ENCODE measurements at regions of chr5 and their contacts with region 1.

Region 1: DNA sequence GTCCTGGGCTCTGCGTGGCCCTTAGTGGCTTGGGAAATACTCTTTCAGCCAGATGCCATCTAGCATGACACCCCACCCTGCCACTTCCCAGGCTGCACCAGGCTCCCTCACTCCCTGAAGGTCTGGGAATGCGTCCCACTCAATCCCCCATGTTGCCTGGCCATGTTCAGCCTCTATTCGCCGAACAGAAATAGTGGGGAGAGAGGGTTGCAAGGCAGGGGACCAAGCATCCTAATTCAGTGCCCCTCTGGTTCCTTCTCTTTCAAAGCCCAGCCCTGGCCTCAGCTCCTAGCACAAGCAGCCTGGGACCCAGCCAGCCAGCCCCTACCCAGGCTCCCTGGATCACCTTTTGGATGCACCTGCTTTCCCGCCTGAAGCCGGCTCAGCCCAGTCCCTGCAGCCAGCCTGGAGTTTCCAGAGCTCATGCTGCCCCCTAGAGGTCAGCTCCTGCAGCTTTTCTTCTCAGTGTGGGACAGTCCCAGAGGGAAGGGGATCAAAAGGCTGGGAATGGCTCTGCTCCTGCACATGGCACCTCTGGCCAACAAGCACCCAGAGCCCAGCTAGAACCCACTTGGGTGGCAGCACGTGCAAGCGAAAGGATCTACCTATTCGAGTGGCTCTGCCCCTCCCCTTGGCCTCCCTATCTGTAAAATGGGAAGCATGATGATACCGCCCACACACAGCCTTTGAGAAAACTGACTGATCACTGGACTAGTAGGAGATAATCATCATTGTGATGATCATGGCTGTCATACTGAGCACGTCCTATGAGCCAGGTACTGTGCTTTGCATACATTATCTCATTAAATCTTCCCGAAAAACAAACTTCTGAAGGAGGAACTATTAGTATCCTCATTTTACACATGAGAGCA is 48.7 kb upstream of the C5orf58 start:
- DNase-seq: no peak
- ATAC-seq: peak; percentile 96
- H3K4me3 ChIP-seq: no peak overlapping the region
- H3K27ac ChIP-seq: no peak overlapping the region
- H3K4me1 ChIP-seq: no peaks in the 10 kb centered on the region
- H3K27me3 ChIP-seq: no peaks in the 10 kb centered on the region; a peak in 1 of 4 replicates
- CTCF ChIP-seq: peak; percentile 73 to 85 (median 84)
- EP300 ChIP-seq: no peak
- POLR2A ChIP-seq: no peak
- RAD21 ChIP-seq: peak; percentile 82

Region 2: DNA sequence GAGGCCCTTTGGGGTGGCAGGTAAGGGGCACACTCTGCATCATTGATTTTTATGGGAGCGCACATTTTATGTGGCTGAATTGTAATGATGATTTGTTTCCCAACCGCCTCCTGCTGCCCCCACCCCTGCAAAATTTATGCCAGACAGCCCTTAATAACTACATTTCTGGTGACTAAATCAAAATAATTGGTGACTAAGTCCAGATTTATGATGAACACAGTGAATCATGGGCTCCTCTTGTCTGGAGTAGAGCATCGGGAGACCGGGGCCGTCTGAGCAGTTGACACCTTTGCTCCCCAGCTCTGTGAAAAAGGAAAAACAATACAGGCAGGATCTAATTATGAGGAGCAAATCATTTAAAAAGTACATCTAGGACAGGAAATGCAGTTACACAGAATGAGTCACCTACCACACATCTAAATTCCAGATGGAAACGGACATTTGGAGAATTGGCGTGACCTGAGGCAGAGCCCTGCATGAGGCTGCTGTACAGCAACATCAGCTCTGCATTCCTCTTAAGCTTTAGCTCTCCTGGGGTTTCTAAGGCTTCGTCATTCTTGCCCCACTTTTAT is 488.0 kb before region 1 on chr5:
- CTCF ChIA-PET with region 1: interaction called, 5 read pairs
- POLR2A ChIA-PET with region 1: no interaction called
- RAD21 ChIA-PET with region 1: no interaction called
- SMC1A ChIA-PET with region 1: no interaction called
- in situ Hi-C with region 1: loop called (anchors 10 kb)
- intact Hi-C with region 1: no loop called
- DNase-seq: no peak
- ATAC-seq: no peak
- H3K4me3 ChIP-seq: no peak overlapping the region
- H3K27ac ChIP-seq: no peak overlapping the region
- H3K4me1 ChIP-seq: no peaks in the 10 kb centered on the region
- H3K27me3 ChIP-seq: no peaks in the 10 kb centered on the region
- CTCF ChIP-seq: no peak
- EP300 ChIP-seq: no peak
- POLR2A ChIP-seq: no peak
- RAD21 ChIP-seq: no peak

Region 3: DNA sequence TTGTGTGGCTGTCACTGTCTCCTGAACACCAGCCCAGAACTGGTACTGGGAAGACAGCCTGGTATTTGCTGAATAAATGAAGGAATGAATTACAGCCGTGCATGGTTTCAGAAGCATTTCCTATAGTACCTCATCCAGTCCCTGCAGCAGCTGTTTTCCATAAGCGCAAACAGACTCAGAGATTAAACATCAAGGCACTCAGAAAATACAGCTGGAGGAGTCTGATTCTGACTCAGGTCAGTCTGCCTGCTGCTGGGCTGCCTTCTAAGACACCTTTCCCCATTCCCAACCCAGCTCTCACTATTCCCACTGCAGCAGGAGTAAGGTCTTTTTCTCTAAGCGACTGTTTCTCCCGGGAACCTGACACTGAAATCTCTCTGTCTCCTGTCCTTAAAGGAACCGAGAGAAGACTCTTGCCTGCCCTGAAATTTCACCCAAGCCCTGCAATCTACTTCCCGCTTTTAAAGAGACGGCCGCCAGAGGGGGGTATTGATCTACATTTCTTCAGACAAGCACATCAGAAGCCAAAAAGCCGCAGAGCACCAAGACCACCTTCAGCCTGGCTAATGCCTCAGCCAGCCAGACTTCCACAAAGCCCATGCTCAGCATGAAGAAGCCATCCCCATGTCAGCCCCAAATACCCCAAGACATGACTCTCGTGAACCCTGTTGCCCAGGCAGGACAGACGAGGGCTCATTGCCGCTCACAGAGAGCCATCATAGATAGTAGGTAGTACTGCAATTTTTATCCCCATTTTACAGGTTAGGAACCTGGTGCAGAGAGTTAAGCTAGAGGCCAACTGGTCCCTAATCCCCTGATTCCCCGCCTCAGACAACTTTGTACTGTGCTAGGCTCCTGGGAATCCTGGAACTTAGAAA is 83.7 kb before region 1 on chr5:
- CTCF ChIA-PET with region 1: interaction called, 80 read pairs
- POLR2A ChIA-PET with region 1: no interaction called
- RAD21 ChIA-PET with region 1: interaction called, 13 read pairs
- SMC1A ChIA-PET with region 1: interaction called, 35 read pairs
- in situ Hi-C with region 1: loop called (anchors 5 kb)
- intact Hi-C with region 1: loop called (anchors 1 kb)
- DNase-seq: peak; percentile 8
- ATAC-seq: peak; percentile 86
- H3K4me3 ChIP-seq: no peak overlapping the region
- H3K27ac ChIP-seq: no peak overlapping the region
- H3K4me1 ChIP-seq: no peaks in the 10 kb centered on the region
- H3K27me3 ChIP-seq: no peaks in the 10 kb centered on the region
- CTCF ChIP-seq: peak; percentile 56 to 71 (median 60)
- EP300 ChIP-seq: no peak
- POLR2A ChIP-seq: no peak
- RAD21 ChIP-seq: peak; percentile 88

Region 4: DNA sequence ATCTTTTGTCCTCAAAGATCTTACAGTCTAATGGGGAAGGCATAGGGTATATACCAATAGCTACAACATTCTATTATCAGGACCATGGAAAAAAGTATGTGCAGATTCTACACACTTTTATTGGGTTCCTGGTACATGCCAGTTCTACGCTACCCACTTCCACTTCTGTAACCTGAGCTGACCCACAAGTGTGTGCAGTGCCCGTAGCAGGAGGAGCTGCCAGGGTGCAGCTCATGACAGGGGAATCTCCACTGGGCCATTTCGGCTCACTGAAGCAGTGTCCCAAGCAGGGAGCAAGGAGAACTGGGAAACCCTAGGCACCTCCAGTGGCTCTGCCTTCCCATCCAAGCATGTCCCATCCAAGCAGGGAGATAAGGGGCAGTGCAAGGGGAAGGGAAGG is 18.0 kb before region 1 on chr5:
- CTCF ChIA-PET with region 1: interaction called, 29 read pairs
- POLR2A ChIA-PET with region 1: no interaction called
- RAD21 ChIA-PET with region 1: no interaction called
- SMC1A ChIA-PET with region 1: no interaction called
- in situ Hi-C with region 1: no loop called
- intact Hi-C with region 1: no loop called
- DNase-seq: no peak
- ATAC-seq: no peak
- H3K4me3 ChIP-seq: no peak overlapping the region
- H3K27ac ChIP-seq: no peak overlapping the region
- H3K4me1 ChIP-seq: peaks cover 7% of the 10 kb centered on the region
- H3K27me3 ChIP-seq: peaks cover 0 to 5% of the 10 kb centered on the region in 2 experiments; a peak in 3 of 4 replicates
- CTCF ChIP-seq: no peak
- EP300 ChIP-seq: no peak
- POLR2A ChIP-seq: no peak
- RAD21 ChIP-seq: no peak

Region 5: DNA sequence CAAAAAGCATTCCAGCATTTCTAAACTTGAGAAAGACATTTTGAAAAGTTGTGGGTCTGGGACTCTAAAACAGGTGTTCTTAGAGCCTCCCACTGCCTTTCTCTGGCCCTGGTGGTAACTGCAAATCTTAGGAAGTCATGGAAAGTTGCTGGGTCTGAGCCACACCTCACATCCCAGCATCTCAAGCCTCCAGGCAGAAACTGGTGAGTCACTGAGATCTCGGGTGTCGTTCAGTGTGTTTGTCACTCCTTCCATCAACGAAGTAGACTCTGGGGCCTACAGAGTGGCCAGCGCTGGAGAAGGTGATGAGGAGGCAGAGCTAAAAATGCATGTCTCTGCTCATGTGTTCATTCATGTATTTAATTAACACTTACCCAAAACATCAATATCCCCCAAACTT is 10.8 kb before region 1 on chr5:
- CTCF ChIA-PET with region 1: interaction called, 29 read pairs
- POLR2A ChIA-PET with region 1: no interaction called
- RAD21 ChIA-PET with region 1: interaction called, 6 read pairs
- SMC1A ChIA-PET with region 1: interaction called, 11 read pairs
- in situ Hi-C with region 1: no loop called
- intact Hi-C with region 1: no loop called
- DNase-seq: no peak
- ATAC-seq: no peak
- H3K4me3 ChIP-seq: no peak overlapping the region
- H3K27ac ChIP-seq: no peak overlapping the region
- H3K4me1 ChIP-seq: peaks cover 6% of the 10 kb centered on the region
- H3K27me3 ChIP-seq: peaks cover 0 to 1% of the 10 kb centered on the region in 2 experiments; a peak in 2 of 4 replicates
- CTCF ChIP-seq: no peak
- EP300 ChIP-seq: no peak
- POLR2A ChIP-seq: no peak
- RAD21 ChIP-seq: no peak

Region 6: DNA sequence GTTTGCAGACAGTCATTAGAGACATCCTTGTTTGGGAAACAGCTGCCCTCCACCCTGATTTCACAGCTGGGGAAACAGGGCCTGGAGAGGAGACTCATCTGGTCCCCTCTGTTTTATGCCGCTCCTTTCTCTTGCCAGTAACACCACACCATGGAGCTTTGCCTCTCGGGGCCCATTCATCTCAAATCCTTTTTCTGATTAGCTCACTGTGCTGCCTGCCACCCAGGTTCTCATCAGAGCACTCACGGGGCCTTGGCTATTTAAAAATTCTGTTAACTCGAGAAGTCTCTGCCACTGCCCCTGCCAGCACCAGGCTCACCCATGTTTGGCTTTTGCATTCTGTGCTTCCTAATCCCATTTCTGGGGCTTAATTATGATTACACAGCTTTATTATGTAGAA is 11.9 kb after region 1 on chr5:
- CTCF ChIA-PET with region 1: interaction called, 34 read pairs
- POLR2A ChIA-PET with region 1: no interaction called
- RAD21 ChIA-PET with region 1: no interaction called
- SMC1A ChIA-PET with region 1: interaction called, 5 read pairs
- in situ Hi-C with region 1: no loop called
- intact Hi-C with region 1: no loop called
- DNase-seq: no peak
- ATAC-seq: no peak
- H3K4me3 ChIP-seq: no peak overlapping the region
- H3K27ac ChIP-seq: no peak overlapping the region
- H3K4me1 ChIP-seq: no peaks in the 10 kb centered on the region
- H3K27me3 ChIP-seq: peaks cover 1 to 2% of the 10 kb centered on the region in 2 experiments; a peak in 2 of 4 replicates
- CTCF ChIP-seq: no peak
- EP300 ChIP-seq: no peak
- POLR2A ChIP-seq: no peak
- RAD21 ChIP-seq: no peak